H1 (cell line): ENCODE measurements at regions of chr19 and their contacts with region 1.

Region 1: DNA sequence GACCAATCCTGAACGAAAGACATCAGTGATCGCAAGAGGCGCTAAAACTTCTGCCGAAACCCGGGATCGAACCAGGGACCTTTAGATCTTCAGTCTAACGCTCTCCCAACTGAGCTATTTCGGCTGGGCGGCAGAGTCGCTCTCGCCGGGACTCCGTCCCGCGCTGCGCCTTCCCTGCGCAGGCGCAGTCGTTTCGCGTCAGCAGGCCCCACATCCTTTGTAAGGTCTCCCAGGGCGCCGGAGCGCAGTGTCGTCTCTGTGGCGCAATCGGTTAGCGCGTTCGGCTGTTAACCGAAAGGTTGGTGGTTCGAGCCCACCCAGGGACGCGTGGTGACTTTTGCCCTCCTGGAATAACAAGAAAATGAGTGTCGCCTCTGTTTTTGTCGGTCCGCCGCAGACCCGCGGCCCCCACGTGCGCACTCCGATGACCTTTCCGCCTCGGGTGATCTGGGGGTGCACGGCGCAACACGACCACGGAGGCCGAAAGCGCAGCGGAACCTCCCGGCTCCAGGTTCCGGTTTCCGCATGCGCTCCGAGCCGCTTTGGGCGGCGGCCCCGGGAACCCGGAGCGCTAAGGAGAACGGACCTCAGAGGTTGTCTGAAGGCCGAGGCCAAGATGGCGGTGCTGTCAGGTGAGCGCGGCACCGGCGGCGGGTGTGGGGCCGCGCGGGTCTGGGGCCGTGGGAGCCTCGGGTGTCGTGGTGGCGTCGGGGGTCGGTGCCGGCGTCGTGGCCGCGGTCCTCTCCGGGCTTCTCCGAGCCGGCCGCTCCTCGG is at the start of gene NDUFS7:
- DNase-seq: peak; percentile 79 to 99
- H3K4me3 ChIP-seq: peak within 1 kb of the TSS; percentile 67 to 91 (median 88)
- H3K27ac ChIP-seq: peak within 1 kb of the TSS; percentile 61; the same call in 1 of the 2 replicates
- H3K4me1 ChIP-seq: peaks cover 0 to 7% (median 3%) of the 10 kb centered on the region in 4 experiments; a peak in 3 of 7 replicates
- H3K27me3 ChIP-seq: no peaks in the 10 kb centered on the region
- CTCF ChIP-seq: peak in 2 of 3 experiments; percentile 18 to 34; a peak in 2 of 4 replicates
- EP300 ChIP-seq: peak; percentile 43 to 91
- POLR2A ChIP-seq: peak in 1 of 2 experiments; percentile 63; a peak in 2 of 3 replicates
- RAD21 ChIP-seq: peak in 1 of 2 experiments; percentile 27; a peak in 1 of 4 replicates
- total RNA-seq, gene NDUFS7: 78.1 and 92.7 TPM in 2 replicates

Region 2: GRCh38 chr19:1370579-1371361 is 12.7 kb before region 1 on chr19:
- CTCF ChIA-PET with region 1: interaction called, 3 read pairs
- POLR2A ChIA-PET with region 1: interaction called, 10 read pairs
- DNase-seq: no peak
- H3K4me3 ChIP-seq: no peak overlapping the region
- H3K27ac ChIP-seq: no peak overlapping the region
- H3K4me1 ChIP-seq: no peaks in the 10 kb centered on the region
- H3K27me3 ChIP-seq: no peaks in the 10 kb centered on the region
- CTCF ChIP-seq: no peak
- EP300 ChIP-seq: no peak
- POLR2A ChIP-seq: no peak
- RAD21 ChIP-seq: no peak

Region 3: DNA sequence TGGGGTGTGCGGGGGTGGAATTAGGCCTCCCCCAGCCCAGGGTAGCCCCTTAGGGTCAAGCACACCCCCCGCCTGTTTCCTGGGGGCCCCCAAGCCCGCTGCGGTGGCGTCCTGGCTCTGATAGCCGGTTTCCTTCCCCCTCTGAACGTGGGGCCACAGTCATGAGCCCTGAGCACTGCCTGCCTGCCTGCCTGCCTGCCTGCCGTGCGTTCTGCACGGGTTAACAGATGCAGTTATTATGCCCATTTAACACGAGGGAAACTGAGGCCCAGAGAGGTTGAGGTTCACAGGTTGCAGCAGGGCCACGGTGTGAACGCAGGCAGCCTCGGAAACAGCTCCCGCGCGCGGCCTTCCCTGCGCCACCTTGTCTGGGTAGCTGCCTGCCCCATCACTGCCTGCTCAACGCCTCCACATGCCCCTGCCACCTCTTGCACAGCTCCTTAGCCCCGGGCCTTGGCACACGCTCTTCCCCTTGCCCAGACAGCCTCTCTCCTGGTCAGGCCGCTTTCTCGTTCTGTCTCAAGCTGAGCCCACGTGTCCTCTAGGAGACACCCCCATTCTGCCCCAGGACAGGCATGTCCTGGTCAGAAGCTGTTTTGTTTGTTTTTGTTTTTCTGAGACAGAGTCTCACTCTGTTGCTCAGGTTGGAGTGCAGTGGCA is 19.0 kb after region 1 on chr19:
- CTCF ChIA-PET with region 1: interaction called, 10 read pairs
- POLR2A ChIA-PET with region 1: interaction called, 8 read pairs
- DNase-seq: no peak
- H3K4me3 ChIP-seq: no peak overlapping the region
- H3K27ac ChIP-seq: no peak overlapping the region
- H3K4me1 ChIP-seq: peaks cover 2 to 8% (median 4%) of the 10 kb centered on the region in 4 experiments; a peak in 6 of 7 replicates
- H3K27me3 ChIP-seq: peaks cover 0 to 2% (median 0%) of the 10 kb centered on the region in 4 experiments; a peak in 2 of 7 replicates
- CTCF ChIP-seq: no peak
- EP300 ChIP-seq: no peak
- POLR2A ChIP-seq: no peak
- RAD21 ChIP-seq: no peak